ENCODE measurements at regions of chr22 and their contacts with region 1.

Region 1: DNA sequence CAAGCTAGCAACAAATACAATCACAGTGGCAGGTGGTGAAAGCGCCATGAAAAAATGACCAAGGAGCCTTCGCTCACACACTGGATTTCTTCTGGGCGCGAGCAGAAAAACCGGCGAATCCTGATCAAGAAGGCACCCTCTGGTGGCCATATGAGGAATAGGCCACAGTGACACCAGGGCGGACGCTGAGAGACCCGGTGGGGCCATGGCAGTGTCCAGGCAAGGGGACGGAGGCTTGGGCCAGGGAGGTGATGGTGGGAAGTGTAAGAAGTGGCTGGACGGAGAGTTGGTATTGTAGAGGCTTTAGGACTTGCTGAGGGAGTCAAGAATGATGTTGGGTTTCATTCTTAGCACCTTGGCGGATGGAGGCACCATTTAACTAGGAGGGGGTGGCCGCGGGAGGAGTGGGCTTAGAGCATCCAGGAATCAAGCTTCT is 16.9 kb upstream of the RAC2 start:
- DNase-seq: peak in 1 of 2 experiments; percentile 78
- H3K4me3 ChIP-seq: no peak overlapping the region
- H3K27ac ChIP-seq: no peak overlapping the region
- H3K4me1 ChIP-seq: peaks cover 4 to 12% (median 5%) of the 10 kb centered on the region in 4 experiments
- H3K27me3 ChIP-seq: peaks cover 0 to 12% (median 7%) of the 10 kb centered on the region in 4 experiments; a peak in 2 of 7 replicates
- CTCF ChIP-seq: peak; percentile 85 to 95 (median 93)
- EP300 ChIP-seq: no peak
- POLR2A ChIP-seq: no peak
- RAD21 ChIP-seq: peak; percentile 62 to 75; a peak in 3 of 4 replicates

Region 2: DNA sequence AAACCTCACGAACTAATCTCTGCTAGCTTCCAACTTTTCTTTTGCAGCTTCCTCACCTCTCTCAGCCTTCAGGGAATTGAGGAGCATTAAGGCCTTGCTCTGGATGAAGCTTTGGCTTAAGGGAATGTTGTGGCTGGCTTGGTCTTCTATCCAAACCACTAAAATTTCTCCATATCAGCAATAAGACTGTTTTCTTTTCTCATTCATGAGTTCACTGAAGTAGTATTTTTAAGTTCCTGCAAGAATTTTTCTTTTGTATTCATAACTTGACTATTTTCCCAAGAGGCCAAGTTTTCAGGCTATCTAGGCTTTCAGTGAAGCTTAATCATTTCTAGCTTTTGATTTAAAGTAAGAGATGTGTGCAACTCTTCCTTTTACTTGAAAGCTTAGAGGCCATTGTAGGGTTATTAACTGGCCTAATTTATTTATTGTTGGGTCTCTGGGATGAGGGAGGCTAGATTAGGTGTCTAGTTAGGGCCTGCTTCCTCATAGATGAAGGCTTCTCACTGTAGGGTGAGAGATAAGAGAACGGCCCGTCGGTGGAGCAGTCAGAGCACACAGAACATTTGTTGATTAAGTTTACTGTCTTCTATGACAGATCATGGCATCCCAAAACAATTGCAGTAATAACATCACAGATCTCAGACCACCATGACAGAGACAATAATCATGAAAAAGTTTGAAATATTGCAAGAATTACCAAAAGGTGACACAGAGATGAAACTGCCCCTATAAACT is 314.3 kb before region 1 on chr22:
- CTCF ChIA-PET with region 1: no interaction called
- POLR2A ChIA-PET with region 1: no interaction called
- DNase-seq: no peak
- H3K4me3 ChIP-seq: no peak overlapping the region
- H3K27ac ChIP-seq: no peak overlapping the region
- H3K4me1 ChIP-seq: no peaks in the 10 kb centered on the region
- H3K27me3 ChIP-seq: no peaks in the 10 kb centered on the region; a peak in 1 of 7 replicates
- CTCF ChIP-seq: peak in 2 of 3 experiments; percentile 27 to 38; a peak in 3 of 4 replicates
- EP300 ChIP-seq: no peak
- POLR2A ChIP-seq: no peak
- RAD21 ChIP-seq: peak; percentile 30 to 40

Region 3: DNA sequence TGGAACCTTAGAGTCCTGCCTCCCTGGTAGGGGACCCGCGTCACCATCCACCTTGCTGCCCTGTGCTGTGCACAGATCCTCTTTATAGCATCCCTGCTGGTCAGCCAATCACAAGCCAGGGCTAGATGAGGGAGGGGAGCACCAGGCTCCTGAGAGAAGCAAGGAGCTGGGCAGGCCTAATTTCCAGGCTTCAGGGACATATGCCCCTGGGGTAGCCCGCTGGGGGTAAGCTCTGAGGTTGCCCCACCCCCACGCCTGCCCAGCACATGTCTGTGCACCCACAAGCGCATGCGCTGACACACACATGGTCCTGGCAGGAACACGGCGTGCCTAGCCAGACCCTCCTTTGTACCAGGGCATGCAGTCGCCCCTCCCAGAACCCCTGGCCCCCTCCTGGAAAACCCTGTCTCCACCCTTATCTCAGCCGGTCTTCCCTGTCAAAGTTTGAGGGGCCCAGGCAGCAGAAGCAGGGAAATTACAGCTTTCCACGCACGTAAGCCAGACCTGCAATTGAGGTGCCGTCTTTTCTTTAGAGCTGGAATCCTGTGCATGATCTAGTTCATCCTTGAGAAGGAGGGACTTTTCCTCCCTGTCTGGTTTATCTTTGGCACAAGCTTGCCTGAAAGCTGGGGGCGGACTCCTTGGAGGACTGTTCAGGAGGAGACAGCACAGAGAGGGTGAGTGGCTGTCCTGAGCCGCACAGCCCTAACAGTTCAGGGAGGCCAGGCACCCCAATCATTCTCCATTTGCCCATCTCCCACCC is 50.7 kb before region 1 on chr22:
- CTCF ChIA-PET with region 1: interaction called, 17 read pairs
- POLR2A ChIA-PET with region 1: no interaction called
- DNase-seq: no peak
- H3K4me3 ChIP-seq: no peak overlapping the region
- H3K27ac ChIP-seq: no peak overlapping the region
- H3K4me1 ChIP-seq: peaks cover 0 to 8% (median 3%) of the 10 kb centered on the region in 4 experiments; a peak in 6 of 7 replicates
- H3K27me3 ChIP-seq: peaks cover 0 to 4% (median 1%) of the 10 kb centered on the region in 4 experiments; a peak in 3 of 7 replicates
- CTCF ChIP-seq: no peak
- EP300 ChIP-seq: no peak
- POLR2A ChIP-seq: no peak
- RAD21 ChIP-seq: no peak

Region 4: DNA sequence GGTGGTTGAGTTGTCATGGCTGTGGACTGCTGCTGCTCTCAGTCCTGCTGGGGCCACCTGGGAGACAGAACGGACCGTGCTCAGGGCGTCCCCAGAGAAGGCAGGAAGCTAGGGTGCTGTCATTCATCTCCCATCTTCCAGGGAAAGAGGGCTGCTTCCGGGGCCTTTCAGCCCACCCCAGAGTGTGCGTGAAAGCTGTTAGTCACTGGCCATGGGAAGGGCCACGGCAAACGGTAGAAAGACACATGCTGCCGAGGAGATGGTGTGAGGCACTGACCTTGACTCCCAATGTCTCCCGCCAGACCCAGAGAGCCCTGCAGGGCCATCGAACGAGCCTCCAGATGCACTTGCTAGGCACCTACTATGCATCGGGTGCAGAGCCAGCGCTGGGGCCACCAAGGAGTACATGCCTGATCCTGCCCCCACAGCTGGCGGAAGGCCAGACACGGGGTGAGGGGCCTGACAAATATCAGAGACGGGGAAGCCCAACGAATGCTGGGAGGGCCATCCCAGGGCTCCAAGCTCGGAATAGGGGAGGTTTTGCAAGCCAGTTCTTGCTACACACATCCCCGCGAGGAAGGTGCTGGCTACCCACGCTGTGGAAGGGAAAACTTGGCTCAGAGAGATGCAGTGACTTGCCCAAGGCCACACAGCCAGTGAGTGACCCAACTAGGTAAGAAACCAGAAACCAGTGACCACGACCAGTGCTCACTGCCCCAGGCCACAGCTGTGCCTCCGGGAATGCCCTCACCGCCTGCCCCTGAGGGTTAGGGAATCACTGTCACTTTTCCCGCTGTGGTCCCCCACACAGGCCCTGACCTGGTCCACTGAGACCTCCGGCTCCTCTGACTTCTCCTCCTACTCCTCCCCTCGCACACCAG is 26.9 kb before region 1 on chr22:
- CTCF ChIA-PET with region 1: interaction called, 97 read pairs
- POLR2A ChIA-PET with region 1: no interaction called
- DNase-seq: no peak
- H3K4me3 ChIP-seq: no peak overlapping the region
- H3K27ac ChIP-seq: no peak overlapping the region
- H3K4me1 ChIP-seq: peaks cover 0 to 5% (median 1%) of the 10 kb centered on the region in 4 experiments; a peak in 2 of 7 replicates
- H3K27me3 ChIP-seq: no peaks in the 10 kb centered on the region
- CTCF ChIP-seq: no peak
- EP300 ChIP-seq: no peak
- POLR2A ChIP-seq: no peak
- RAD21 ChIP-seq: no peak

Region 5: GRCh38 chr22:37295213-37295886 is 34.4 kb after region 1 on chr22:
- CTCF ChIA-PET with region 1: interaction called, 17 read pairs
- POLR2A ChIA-PET with region 1: no interaction called
- DNase-seq: no peak
- H3K4me3 ChIP-seq: no peak overlapping the region
- H3K27ac ChIP-seq: no peak overlapping the region
- H3K4me1 ChIP-seq: peaks cover 0 to 6% (median 3%) of the 10 kb centered on the region in 4 experiments; a peak in 4 of 7 replicates
- H3K27me3 ChIP-seq: no peaks in the 10 kb centered on the region; a peak in 1 of 7 replicates
- CTCF ChIP-seq: no peak
- EP300 ChIP-seq: no peak
- POLR2A ChIP-seq: no peak
- RAD21 ChIP-seq: no peak

Region 6: GRCh38 chr22:37345863-37346504 is 85.1 kb after region 1 on chr22:
- CTCF ChIA-PET with region 1: no interaction called
- POLR2A ChIA-PET with region 1: no interaction called
- DNase-seq: no peak
- H3K4me3 ChIP-seq: no peak overlapping the region
- H3K27ac ChIP-seq: no peak overlapping the region
- H3K4me1 ChIP-seq: peaks cover 0 to 9% (median 5%) of the 10 kb centered on the region in 4 experiments; a peak in 5 of 7 replicates
- H3K27me3 ChIP-seq: peaks cover 0 to 3% (median 0%) of the 10 kb centered on the region in 4 experiments; a peak in 2 of 7 replicates
- CTCF ChIP-seq: no peak
- EP300 ChIP-seq: no peak
- POLR2A ChIP-seq: no peak
- RAD21 ChIP-seq: no peak

Region 7: GRCh38 chr22:37390075-37390474 is 129.2 kb after region 1 on chr22:
- CTCF ChIA-PET with region 1: interaction called, 12 read pairs
- POLR2A ChIA-PET with region 1: no interaction called
- DNase-seq: no peak
- H3K4me3 ChIP-seq: no peak overlapping the region
- H3K27ac ChIP-seq: no peak overlapping the region
- H3K4me1 ChIP-seq: peaks cover 0 to 4% (median 0%) of the 10 kb centered on the region in 4 experiments; a peak in 3 of 7 replicates
- H3K27me3 ChIP-seq: no peaks in the 10 kb centered on the region; a peak in 1 of 7 replicates
- CTCF ChIP-seq: no peak
- EP300 ChIP-seq: no peak
- POLR2A ChIP-seq: no peak
- RAD21 ChIP-seq: no peak

Region 8: DNA sequence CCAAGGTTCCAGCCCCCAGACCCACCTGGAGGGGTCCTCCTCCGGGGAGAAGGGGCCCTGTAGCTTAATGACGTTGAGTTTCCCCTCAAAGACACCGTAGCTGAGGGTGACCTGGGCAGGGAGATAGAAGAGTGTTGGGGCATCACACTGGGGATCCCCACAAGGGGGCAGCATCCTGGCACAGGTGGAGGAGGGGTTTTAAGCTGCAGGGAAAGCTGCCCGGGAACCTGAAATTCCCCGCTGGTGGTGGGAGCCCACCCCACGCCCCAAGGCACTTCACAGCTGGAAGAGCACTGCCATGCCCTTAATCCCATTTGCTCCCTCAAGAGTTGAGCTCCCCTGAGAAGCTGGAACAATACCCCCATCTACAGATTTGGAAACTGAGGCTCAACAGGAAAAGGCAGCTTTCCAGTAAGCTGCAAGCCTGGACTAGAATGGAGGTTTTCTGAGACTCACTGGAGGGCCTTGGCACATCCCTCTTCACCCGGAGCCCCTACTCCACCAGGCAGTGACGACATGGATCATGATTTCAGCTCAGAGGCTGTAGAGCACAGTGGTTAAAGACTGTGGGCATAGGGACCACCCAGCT is 211.6 kb after region 1 on chr22:
- CTCF ChIA-PET with region 1: interaction called, 10 read pairs
- POLR2A ChIA-PET with region 1: no interaction called
- DNase-seq: peak in 1 of 2 experiments; percentile 83
- H3K4me3 ChIP-seq: no peak overlapping the region; a peak in 1 of 8 replicates
- H3K27ac ChIP-seq: no peak overlapping the region
- H3K4me1 ChIP-seq: no peaks in the 10 kb centered on the region; a peak in 3 of 7 replicates
- H3K27me3 ChIP-seq: no peaks in the 10 kb centered on the region; a peak in 1 of 7 replicates
- CTCF ChIP-seq: peak; percentile 85 to 92 (median 89)
- EP300 ChIP-seq: no peak
- POLR2A ChIP-seq: no peak
- RAD21 ChIP-seq: peak; percentile 66 to 71

Measured in H1 (cell line).